Mammary epithelial cell (primary cell): ENCODE measurements at regions of chr5 and their contacts with region 1.

Region 1: DNA sequence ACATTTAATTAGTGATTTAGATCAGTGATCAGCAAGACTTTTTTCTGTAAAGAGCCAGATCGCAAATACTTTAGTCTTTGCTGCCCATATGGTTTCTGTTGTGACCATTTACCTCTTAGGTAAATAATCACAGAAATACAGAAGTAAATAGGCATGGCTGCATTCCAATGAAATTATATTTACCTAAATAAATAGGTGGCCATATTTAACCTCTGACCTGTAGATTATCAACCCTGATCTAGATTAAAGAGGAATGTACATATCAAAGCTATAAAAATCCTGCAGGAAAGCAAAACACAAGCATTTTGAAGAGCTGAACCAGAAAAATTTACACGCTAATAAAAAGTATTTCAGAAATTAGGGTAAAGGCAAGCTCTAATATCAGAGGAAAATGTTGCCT is 709.7 kb downstream of the CDH18 start:
- DNase-seq: no peak
- H3K4me3 ChIP-seq: no peak overlapping the region
- H3K27ac ChIP-seq: no peak overlapping the region
- H3K4me1 ChIP-seq: no peaks in the 10 kb centered on the region
- H3K27me3 ChIP-seq: no peaks in the 10 kb centered on the region
- CTCF ChIP-seq: no peak

Region 2: DNA sequence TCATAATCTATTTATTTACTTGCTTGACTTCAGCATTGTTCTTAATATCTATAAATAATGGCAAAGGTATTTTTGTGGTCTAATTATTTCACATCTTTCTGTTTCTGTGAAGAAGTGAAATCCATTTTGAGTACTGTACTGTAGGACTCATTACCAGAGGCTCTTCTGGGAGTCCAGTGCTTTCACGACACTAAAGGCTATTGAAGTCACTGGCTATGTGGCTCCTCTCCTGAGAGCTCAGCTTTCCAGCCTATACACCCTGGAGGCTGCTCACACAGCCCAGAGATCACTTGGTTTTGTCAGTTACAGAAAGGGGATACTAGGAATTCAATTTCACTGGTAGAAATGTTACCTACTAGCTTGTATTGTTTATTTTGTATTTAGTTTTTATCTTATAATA is 1096.7 kb before region 1 on chr5:
- CTCF ChIA-PET with region 1: no interaction called
- dilution Hi-C with region 1: no loop called
- in situ Hi-C with region 1: no loop called
- intact Hi-C with region 1: no loop called
- DNase-seq: no peak
- H3K4me3 ChIP-seq: no peak overlapping the region
- H3K27ac ChIP-seq: no peak overlapping the region
- H3K4me1 ChIP-seq: no peaks in the 10 kb centered on the region
- H3K27me3 ChIP-seq: no peaks in the 10 kb centered on the region
- CTCF ChIP-seq: no peak

Region 3: DNA sequence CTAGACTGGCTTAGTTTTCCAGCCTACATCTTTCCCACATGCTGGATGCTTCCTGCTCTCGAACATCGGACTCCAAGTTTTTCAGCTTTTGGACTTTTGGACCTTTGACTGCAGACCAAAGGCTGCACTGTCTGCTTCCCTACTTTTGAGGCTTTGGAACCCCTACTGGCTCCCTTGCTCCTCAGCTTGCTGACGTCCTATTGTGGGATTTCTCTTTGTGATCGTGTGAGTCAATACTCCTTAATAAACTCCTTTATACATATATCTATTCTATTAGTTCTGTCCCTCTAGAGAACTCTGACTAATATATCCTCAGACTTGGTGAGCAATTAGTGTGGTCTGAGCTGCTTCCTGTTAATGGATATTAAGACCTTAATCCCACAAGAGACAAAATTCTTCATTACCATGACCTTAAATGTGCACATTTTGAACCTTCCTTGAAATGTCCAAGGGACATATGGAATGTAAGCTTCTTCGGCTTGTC is 43.1 kb before region 1 on chr5:
- CTCF ChIA-PET with region 1: no interaction called
- dilution Hi-C with region 1: no loop called
- in situ Hi-C with region 1: no loop called
- intact Hi-C with region 1: no loop called
- DNase-seq: peak; percentile 53
- H3K4me3 ChIP-seq: no peak overlapping the region
- H3K27ac ChIP-seq: no peak overlapping the region
- H3K4me1 ChIP-seq: peaks cover 17% of the 10 kb centered on the region
- H3K27me3 ChIP-seq: no peaks in the 10 kb centered on the region
- CTCF ChIP-seq: no peak

Region 4: GRCh38 chr5:19615661-19616060 is 337.4 kb after region 1 on chr5:
- CTCF ChIA-PET with region 1: interaction called, 13 read pairs
- dilution Hi-C with region 1: no loop called
- in situ Hi-C with region 1: no loop called
- intact Hi-C with region 1: no loop called
- DNase-seq: peak; percentile 20
- H3K4me3 ChIP-seq: no peak overlapping the region
- H3K27ac ChIP-seq: no peak overlapping the region
- H3K4me1 ChIP-seq: no peaks in the 10 kb centered on the region
- H3K27me3 ChIP-seq: no peaks in the 10 kb centered on the region
- CTCF ChIP-seq: no peak